ENCODE measurements at regions of chr11 and their contacts with region 1.

Region 1: GRCh38 chr11:60175860-60176275 is 7.0 kb downstream of the MS4A6A start:
- DNase-seq: no peak
- CTCF ChIP-seq: no peak

Region 2: DNA sequence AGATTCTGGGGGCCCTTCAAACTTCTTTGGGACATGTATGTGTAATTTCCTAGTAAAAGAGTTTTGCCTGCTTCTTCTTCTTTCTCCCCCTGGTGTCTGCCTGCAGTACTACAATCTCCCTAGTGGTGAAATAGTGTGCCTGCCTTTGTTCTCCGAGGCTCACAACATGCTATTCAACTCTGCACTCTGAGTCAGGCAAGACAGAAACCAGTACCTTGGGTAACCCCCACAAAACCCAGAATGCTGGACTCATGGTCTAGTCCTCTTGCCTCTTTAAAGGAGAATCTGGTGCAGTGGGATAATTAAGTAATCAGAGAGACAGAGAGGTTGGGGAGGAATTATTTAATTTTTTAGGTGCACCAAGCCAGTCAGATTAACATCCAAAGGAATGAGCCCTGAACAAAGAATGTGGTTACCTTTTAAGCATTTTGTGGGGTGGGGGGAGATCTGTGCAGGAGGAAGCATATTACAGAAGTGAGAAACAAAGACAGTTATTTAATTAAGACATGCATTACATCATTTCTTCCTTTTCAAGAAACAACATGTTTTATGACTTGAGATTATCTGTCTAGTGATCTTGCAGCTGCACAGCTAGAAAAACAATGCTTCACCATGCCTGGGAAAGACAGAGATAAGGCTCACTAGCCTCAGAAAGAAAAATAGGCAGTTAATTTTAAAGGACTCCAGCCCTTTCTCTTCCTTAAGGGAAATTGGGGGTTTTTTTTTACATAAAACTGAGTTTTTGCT is 18.0 kb after region 1 on chr11:
- CTCF ChIA-PET with region 1: interaction called, 14 read pairs
- POLR2A ChIA-PET with region 1: no interaction called
- DNase-seq: peak; percentile 47
- CTCF ChIP-seq: peak; percentile 70